ENCODE measurements at regions of chr1 and their contacts with region 1.

Region 1: GRCh38 chr1:168342572-168343280 is 62.0 kb downstream of the TBX19 start:
- DNase-seq: peak; percentile 92
- ATAC-seq: peak; percentile 98
- H3K4me3 Mint-ChIP-seq: no peak overlapping the region
- H3K27ac Mint-ChIP-seq: peak overlapping the region; percentile 77
- H3K4me1 Mint-ChIP-seq: peaks cover 62% of the 10 kb centered on the region
- H3K27me3 Mint-ChIP-seq: no peaks in the 10 kb centered on the region

Region 2: GRCh38 chr1:168321945-168322344 is 20.8 kb before region 1 on chr1:
- CTCF ChIA-PET with region 1: interaction called, 28 read pairs
- POLR2A ChIA-PET with region 1: no interaction called
- DNase-seq: no peak
- ATAC-seq: peak; percentile 85
- H3K4me3 Mint-ChIP-seq: no peak overlapping the region
- H3K27ac Mint-ChIP-seq: no peak overlapping the region
- H3K4me1 Mint-ChIP-seq: peaks cover 24% of the 10 kb centered on the region
- H3K27me3 Mint-ChIP-seq: no peaks in the 10 kb centered on the region

Region 3: GRCh38 chr1:168379110-168379860 is 36.6 kb after region 1 on chr1:
- CTCF ChIA-PET with region 1: interaction called, 16 read pairs
- POLR2A ChIA-PET with region 1: no interaction called
- DNase-seq: no peak
- ATAC-seq: no peak
- H3K4me3 Mint-ChIP-seq: no peak overlapping the region
- H3K27ac Mint-ChIP-seq: no peak overlapping the region
- H3K4me1 Mint-ChIP-seq: no peaks in the 10 kb centered on the region
- H3K27me3 Mint-ChIP-seq: peaks cover 4% of the 10 kb centered on the region

Region 4: GRCh38 chr1:168408536-168409242 is 66.0 kb after region 1 on chr1:
- CTCF ChIA-PET with region 1: interaction called, 25 read pairs
- POLR2A ChIA-PET with region 1: no interaction called
- DNase-seq: peak; percentile 74
- ATAC-seq: peak; percentile 90
- H3K4me3 Mint-ChIP-seq: peak overlapping the region; percentile 30
- H3K27ac Mint-ChIP-seq: peak overlapping the region; percentile 78
- H3K4me1 Mint-ChIP-seq: peaks cover 43% of the 10 kb centered on the region
- H3K27me3 Mint-ChIP-seq: no peaks in the 10 kb centered on the region

Region 5: DNA sequence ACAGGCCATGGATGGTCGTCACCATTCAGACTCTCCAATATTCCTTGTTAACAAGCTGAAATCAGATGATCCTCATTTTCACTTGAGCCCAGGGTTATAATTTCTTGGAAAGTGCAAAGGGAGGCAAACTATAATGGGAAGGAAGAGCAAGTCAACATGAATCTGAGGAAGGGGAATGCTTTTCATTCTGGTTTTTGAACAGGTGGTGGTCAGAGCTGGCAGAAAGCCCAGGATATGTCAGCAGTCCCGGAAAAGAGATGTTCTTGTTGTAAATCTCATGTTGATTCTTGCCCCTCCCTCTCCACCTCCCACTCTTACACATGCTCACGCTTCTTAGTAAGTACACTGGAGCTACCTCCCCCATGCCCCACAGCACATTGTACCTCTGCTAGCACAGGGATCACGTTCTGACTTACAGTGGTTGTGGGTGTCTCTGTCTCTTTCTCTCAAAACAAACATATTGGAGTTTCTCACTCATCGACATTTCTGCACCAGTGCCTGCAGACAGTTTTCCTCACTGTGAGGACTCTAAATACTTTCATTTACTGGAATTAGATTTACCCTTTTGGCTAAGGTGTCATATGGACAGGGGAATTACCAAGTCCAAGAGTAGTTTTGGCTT is 123.5 kb after region 1 on chr1:
- CTCF ChIA-PET with region 1: interaction called, 29 read pairs
- POLR2A ChIA-PET with region 1: no interaction called
- DNase-seq: peak; percentile 71
- ATAC-seq: peak; percentile 61
- H3K4me3 Mint-ChIP-seq: peak overlapping the region; percentile 3
- H3K27ac Mint-ChIP-seq: peak overlapping the region; percentile 84
- H3K4me1 Mint-ChIP-seq: peaks cover 77% of the 10 kb centered on the region
- H3K27me3 Mint-ChIP-seq: no peaks in the 10 kb centered on the region

Region 6: DNA sequence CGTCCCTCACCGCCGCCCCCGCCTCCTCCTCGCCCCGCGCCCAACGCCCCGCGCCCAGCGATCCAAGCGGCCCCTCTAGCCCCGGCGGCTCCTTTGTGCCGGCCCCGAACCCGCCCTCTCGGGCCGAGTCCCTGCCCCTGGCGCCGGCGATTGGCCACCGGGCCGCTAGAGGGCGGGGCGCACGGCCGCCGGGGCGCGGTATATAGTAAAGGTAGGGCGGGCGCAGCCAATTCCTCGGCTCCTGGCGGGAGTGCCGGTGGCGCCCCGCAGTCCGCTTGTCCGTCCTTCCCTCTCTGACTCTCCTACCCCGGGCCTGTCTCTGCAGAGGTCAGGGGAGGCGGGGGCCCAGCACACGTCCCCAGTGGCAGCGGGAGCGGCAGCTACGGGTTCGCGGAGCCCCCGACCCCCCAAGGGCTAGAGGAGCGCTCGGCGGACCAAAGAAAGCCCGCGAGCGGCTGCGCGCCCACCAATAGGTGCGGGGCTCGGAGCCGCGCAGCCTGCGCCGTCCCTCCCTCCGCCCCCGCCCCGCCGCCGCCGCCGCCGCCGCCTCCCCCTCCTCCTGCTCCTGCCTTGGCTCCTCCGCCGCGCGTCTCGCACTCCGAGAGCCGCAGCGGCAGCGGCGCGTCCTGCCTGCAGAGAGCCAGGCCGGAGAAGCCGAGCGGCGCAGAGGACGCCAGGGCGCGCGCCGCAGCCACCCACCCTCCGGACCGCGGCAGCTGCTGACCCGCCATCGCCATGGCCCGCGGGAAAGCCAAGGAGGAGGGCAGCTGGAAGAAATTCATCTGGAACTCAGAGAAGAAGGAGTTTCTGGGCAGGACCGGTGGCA is 763.6 kb after region 1 on chr1 and contains the start of gene ATP1B1:
- CTCF ChIA-PET with region 1: interaction called, 10 read pairs
- POLR2A ChIA-PET with region 1: no interaction called
- DNase-seq: peak; percentile 86
- ATAC-seq: peak; percentile 95
- H3K4me3 Mint-ChIP-seq: peak within 1 kb of the TSS; percentile 77
- H3K27ac Mint-ChIP-seq: peak within 1 kb of the TSS; percentile 84
- H3K4me1 Mint-ChIP-seq: peaks cover 43% of the 10 kb centered on the region
- H3K27me3 Mint-ChIP-seq: peaks cover 10% of the 10 kb centered on the region
- total RNA-seq, gene ATP1B1: 10.7 to 12.0 TPM

Measured in activated CD8-positive, alpha-beta T cell treated with anti-CD3 and anti-CD28 coated beads, Interleukin-2, amount 10 ng/mL, durations not matched to agents 7 days and 5 days (primary cell).